Common myeloid progenitor, CD34-positive (primary cell): ENCODE measurements at regions of chr6 and their contacts with region 1.

Region 1: DNA sequence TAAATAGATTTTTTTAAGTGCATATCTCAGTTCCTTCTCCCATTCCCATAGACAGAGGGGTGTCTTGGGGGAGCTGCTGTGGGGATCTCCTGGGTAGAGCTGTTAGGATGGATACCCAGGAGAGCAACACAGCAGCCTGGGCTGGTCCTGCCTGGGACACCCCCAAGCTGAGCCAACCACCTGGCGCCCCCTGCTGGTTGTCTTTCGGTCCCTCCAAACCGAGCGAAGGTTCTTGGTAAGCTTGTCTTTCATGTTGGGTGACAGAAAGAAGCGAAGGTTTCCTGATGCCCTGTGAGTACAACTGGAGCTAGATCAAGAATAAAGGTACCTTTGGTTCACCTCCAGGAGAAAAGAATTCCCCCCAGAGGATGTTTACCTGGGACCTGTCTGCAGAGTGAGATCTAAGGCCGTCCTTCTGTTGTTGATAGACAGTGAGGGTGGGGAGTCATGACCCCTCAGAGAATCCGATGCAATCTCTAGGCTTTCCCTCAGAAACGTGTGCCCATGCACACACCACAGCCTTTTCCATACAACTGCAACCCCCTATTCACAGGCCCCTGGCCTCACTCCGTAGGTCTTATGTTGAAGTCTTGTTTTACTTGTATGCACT is 50.8 kb downstream of the SNX9 start:
- DNase-seq: peak; percentile 72 to 82 (median 77)
- H3K4me3 ChIP-seq: no peak overlapping the region
- H3K27ac ChIP-seq: no peak overlapping the region
- H3K4me1 ChIP-seq: no peaks in the 10 kb centered on the region
- H3K27me3 ChIP-seq: no peaks in the 10 kb centered on the region

Region 2: DNA sequence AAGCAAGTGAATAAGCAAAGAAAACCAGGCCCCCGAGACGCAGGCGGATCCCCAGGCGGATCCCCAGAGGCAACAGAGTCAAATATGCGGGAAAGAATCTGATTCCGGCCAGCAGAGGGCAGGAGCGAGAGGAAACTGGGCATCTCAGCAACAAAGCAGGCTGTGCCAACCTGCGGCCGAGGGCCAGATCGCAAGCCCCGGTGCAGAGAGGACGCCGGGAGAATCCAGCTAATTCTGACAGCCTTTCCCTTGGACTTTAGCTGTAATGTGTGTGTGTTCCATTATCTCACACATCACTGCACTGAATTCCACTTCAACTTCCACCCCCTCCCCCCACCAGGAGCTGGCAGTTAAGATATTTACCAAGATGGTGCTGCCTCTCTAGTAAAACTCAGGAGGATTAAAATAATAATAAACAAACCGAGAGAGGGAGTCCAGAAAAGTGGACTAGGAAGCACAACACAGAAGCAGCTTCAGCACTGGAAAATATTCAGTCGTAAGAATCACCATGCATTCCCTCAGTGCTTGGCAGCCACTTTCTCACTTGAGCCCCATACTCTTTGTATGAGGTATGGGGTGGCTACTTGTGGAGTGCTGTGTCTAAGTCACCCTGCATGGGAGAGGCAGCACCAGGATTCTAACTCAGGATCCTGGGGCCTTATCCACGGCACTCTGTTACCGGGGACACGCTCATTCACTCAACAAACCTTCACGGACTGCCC is 117.0 kb before region 1 on chr6:
- CTCF ChIA-PET with region 1: interaction called, 82 read pairs
- POLR2A ChIA-PET with region 1: no interaction called
- DNase-seq: peak; percentile 78 to 87 (median 81)
- H3K4me3 ChIP-seq: no peak overlapping the region
- H3K27ac ChIP-seq: no peak overlapping the region
- H3K4me1 ChIP-seq: peaks cover 2 to 11% (median 10%) of the 10 kb centered on the region in 4 experiments
- H3K27me3 ChIP-seq: peaks cover 0 to 2% (median 0%) of the 10 kb centered on the region in 5 experiments

Region 3: DNA sequence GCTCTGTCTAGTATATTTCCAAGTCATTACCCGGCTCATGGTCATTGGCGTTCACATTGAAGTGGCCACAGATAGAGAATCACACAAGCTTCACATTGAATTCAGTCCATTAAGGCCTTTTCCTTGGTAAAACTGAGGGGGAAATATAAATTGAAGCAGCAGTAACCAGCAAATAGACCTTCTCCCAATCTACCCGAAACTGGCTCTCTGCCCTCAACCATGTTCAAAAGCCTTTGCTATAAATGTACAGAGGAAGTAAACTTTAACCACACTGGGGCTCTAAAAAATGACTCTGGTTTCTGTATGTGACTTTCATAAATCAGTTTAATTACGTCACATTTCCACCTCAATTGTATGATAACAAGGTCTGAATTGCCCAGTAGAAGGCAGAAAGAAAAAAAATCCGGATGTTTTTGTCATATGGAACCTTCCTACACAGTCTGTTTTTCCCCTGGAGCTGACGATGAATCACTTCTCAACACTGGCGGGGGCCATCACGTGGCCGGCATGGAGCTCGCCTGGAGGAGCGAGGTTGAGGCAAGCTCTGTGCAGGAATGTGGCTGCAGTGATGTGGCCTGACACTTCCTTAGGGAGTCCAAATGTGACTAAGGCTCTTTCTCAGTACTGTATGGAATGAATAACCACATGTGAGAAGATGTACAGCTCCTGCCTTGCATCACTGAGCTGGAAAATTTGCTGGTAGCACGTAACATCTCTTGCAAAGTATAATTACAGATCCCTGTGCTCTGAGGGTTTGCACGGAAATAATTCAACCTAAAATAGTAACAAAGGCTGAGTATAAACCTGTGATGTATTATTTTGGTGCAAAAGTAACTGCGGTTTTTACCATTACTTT is 109.4 kb before region 1 on chr6:
- CTCF ChIA-PET with region 1: interaction called, 82 read pairs
- POLR2A ChIA-PET with region 1: no interaction called
- DNase-seq: peak; percentile 92 to 97 (median 96)
- H3K4me3 ChIP-seq: peak overlapping the region in 4 of 7 experiments; percentile 20 to 49 (median 30)
- H3K27ac ChIP-seq: no peak overlapping the region
- H3K4me1 ChIP-seq: peaks cover 21 to 58% (median 53%) of the 10 kb centered on the region in 4 experiments
- H3K27me3 ChIP-seq: no peaks in the 10 kb centered on the region

Region 4: DNA sequence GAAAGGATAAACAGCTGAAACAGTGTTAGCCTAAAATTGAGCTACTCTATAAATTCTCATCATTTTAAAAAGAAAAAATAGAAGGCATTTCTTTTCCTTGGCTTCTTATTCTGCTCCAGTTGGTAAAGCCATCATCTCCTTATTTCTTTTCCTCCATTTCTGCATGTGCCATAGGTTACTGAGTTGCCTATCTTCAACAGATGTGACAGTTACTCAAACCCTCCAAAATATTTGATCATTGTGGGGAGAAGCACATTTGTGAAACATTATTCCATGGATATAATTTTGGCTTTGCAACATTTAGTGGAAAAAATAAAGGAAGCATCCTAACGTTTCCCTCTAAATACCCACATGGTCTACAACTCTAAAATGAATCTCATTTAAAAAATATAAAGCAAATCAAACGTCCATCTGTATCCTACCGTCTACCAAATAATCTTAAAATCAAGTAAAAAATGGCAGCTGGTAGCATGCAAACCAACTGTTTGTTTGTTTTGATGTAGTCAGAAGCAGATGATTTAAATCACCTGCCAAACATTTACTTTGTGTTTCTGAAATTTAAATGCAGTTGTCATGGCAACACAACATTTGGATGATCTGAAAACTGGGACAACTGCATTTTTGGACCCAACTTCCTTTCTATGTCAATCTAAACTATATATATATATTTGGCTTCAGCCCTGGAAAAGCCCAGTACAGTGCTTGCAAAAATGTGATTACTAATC is 67.5 kb before region 1 on chr6:
- CTCF ChIA-PET with region 1: interaction called, 11 read pairs
- POLR2A ChIA-PET with region 1: no interaction called
- DNase-seq: peak in 1 of 3 donors; percentile 9
- H3K4me3 ChIP-seq: no peak overlapping the region
- H3K27ac ChIP-seq: no peak overlapping the region
- H3K4me1 ChIP-seq: no peaks in the 10 kb centered on the region
- H3K27me3 ChIP-seq: no peaks in the 10 kb centered on the region

Region 5: GRCh38 chr6:157845493-157846259 is 28.2 kb before region 1 on chr6:
- CTCF ChIA-PET with region 1: interaction called, 12 read pairs
- POLR2A ChIA-PET with region 1: no interaction called
- DNase-seq: no peak
- H3K4me3 ChIP-seq: no peak overlapping the region
- H3K27ac ChIP-seq: no peak overlapping the region
- H3K4me1 ChIP-seq: peaks cover 5 to 22% (median 11%) of the 10 kb centered on the region in 4 experiments
- H3K27me3 ChIP-seq: no peaks in the 10 kb centered on the region

Region 6: DNA sequence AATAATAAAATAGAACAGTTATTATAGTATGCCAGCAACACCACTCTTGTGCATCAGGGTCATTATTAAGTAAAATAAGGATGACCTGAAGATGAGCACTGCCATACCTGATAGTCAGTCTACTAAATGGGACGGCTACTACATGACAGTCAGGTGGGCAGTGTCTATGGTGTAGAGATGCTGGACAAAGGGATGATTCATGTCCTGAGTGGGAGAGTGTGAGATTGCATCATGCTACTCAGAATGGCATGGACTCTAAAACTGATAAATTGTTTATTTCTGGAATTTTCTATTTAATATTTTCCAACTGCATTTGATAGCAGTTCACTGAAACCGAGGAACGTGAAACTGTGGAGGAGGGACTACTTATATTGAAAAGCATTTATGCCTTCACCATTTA is 12.0 kb before region 1 on chr6:
- CTCF ChIA-PET with region 1: interaction called, 23 read pairs
- POLR2A ChIA-PET with region 1: no interaction called
- DNase-seq: no peak
- H3K4me3 ChIP-seq: no peak overlapping the region
- H3K27ac ChIP-seq: no peak overlapping the region
- H3K4me1 ChIP-seq: peaks cover 0 to 4% (median 0%) of the 10 kb centered on the region in 4 experiments
- H3K27me3 ChIP-seq: no peaks in the 10 kb centered on the region